ENCODE measurements at regions of chr13 and their contacts with region 1.

Region 1: DNA sequence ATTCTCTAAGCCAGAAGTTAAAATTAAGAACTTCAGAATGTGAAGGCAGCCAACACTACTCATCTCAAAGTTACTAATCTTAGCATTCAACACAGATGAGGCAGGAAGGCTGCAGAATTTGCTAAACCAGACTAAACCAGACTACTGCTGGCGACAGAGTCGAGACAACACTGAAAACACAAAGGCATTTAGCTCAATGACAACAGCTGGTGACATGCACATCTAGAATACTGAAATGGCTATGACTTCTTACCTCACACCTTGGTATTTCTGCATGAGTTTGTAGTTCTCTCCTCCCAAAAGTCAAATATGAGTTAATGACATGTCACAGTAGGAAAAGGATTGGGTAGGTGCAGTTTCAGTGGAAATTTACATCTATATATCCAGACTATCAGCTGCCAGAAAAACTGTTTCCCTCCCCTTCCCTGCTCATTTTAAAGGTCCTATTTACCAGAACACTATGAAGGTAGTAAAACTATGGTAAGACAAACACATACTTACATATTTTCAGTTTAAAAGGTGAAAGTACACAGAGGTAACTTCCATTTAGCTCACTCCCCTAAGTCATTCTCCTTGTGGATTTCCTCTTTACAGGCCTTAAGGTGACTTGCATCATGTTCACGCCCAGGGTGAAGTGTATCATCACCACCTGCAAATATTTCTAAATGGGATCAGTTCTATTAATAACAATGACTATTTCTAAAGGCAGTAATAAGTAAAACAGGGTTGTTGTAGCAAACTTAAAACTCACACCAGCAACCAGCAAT is 21.4 kb downstream of the FOXO1 start:
- DNase-seq: peak in 1 of 2 donors; percentile 62
- ATAC-seq: peak; percentile 85 to 87
- H3K4me3 ChIP-seq: peak overlapping the region in 1 of 4 donors; percentile 36
- H3K27ac ChIP-seq: peak overlapping the region; percentile 66 to 75 (median 74)
- H3K4me1 ChIP-seq: peaks cover 90 to 100% of the 10 kb centered on the region in 2 donors
- H3K27me3 ChIP-seq: no peaks in the 10 kb centered on the region
- CTCF ChIP-seq: no peak
- POLR2A ChIP-seq: no peak

Region 2: DNA sequence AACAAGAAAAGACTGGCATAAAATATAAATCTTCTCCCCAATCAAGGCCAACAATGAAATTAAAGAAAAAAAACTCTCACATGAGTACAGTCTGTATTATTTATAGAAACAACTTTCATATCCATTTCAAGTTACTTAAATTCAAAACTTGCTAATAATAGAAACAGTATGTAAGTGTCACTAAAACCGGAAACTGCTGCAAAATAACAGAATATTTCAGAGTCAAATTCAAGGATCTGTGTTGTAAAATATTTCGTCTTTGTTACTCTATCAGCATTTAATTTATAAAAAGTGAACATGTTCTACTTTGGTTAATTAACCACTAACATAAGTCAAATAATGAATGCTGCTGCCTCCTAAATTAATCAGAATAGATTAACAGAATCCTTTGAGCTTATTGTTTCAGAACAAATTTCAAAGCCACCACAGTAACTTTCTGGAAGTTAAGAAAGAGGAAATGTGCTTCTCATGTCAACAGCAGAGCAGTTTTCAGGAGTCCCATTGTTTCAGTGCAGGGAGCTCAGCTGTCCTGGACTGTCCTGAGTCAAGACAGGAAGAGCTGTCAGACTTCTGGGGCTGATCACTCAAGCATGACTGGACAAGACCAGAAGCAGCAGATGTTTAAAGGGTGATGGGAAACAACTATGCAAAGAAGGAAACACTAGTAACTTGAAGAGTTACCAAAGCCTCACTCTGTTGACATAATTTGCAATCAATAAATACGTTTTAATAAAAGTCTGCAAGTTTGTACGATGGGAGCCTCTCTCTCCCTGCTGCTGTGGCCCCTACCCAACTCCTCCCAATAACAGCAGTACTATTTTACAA is 55.5 kb before region 1 on chr13:
- in situ Hi-C with region 1: loop called in 1 of 4 experiments (anchors 10 kb)
- intact Hi-C with region 1: no loop called
- DNase-seq: peak; percentile 74 to 79
- ATAC-seq: peak; percentile 86
- H3K4me3 ChIP-seq: peak overlapping the region in 3 of 4 donors; percentile 20 to 22 (median 21)
- H3K27ac ChIP-seq: peak overlapping the region; percentile 83 to 89 (median 86)
- H3K4me1 ChIP-seq: peaks cover 93 to 96% of the 10 kb centered on the region in 2 donors
- H3K27me3 ChIP-seq: no peaks in the 10 kb centered on the region
- CTCF ChIP-seq: no peak
- POLR2A ChIP-seq: peak; percentile 40 to 71

Region 3: DNA sequence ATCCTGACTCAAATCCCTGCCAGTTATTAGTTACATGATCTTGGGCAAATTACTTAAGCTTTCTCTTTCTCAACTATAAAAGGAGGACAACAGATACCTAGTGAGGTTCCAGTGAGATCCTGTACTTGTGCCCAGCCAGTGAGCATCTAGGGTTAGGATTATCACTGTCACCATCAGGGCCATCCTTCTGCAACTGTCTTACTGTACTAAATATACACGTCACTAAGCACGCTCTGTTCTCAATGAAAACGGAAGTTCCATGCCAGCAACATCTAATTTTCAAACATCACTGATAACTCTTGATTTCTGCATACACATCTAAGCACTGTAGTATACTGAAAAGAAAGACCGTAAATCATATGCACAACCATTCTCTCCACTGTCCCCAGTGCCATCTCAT is 48.5 kb before region 1 on chr13:
- in situ Hi-C with region 1: loop called in 1 of 4 experiments (anchors 10 kb)
- intact Hi-C with region 1: loop called (anchors 2 kb)
- DNase-seq: peak; percentile 48 to 66
- ATAC-seq: peak; percentile 63 to 78
- H3K4me3 ChIP-seq: peak overlapping the region in 3 of 4 donors; percentile 13 to 19 (median 18)
- H3K27ac ChIP-seq: peak overlapping the region; percentile 83 to 89 (median 86)
- H3K4me1 ChIP-seq: peaks cover 97 to 100% of the 10 kb centered on the region in 2 donors
- H3K27me3 ChIP-seq: no peaks in the 10 kb centered on the region
- CTCF ChIP-seq: no peak
- POLR2A ChIP-seq: no peak

Region 4: DNA sequence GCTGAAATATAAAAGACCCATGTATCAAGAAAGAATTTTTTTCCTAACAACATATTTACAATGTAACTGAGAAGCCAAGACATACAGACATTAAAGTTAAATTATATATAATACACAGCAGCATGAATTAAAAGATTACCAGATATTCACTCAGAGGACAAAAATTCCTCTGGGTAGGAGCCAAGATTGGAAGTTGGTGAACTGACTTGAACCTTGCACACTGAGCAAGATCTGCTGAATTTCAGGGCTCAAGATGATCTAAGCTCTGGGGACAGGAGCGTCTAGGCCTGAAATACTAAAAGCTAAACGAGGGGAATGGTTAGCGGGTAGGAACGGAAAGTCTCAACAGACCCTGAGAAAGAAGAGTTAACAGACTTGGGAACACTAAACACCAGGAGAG is 12.9 kb after region 1 on chr13:
- in situ Hi-C with region 1: no loop called
- intact Hi-C with region 1: loop called (anchors 1 kb)
- DNase-seq: no peak
- ATAC-seq: no peak
- H3K4me3 ChIP-seq: peak overlapping the region in 2 of 4 donors; percentile 2 to 12
- H3K27ac ChIP-seq: peak overlapping the region; percentile 96 to 99 (median 98)
- H3K4me1 ChIP-seq: peaks cover 85 to 86% of the 10 kb centered on the region in 2 donors
- H3K27me3 ChIP-seq: no peaks in the 10 kb centered on the region
- CTCF ChIP-seq: no peak
- POLR2A ChIP-seq: no peak

Region 5: DNA sequence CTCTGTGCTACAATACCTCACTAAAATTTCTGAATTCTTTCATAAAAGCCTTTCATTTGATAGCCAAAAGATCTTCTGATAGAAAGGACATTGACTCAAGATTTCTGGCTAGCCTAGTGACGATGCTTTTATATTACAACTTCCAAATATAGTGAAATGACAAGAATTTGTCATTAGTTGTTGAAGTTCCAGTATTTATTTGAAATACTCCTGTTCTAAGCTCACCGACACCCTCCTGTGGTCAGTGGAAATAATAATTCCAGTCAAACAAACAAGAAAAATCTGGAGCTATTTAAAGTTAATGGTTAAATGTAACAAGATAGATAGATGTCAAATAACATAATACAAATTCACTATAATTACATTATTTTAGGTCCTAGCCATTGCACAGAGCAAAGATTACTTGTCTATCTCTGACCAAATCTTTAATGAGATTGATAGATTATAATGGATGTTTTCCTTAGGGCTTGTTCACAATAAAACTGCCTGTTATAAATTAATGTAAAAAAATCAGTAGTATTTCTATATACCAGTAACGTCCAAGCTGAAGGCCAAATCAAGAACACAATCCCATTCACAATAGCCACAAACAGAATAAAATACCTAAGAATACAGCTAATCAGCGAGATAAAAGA is 1007.8 kb after region 1 on chr13:
- in situ Hi-C with region 1: no loop called
- intact Hi-C with region 1: no loop called
- DNase-seq: no peak
- ATAC-seq: peak; percentile 43 to 58
- H3K4me3 ChIP-seq: no peak overlapping the region
- H3K27ac ChIP-seq: peak overlapping the region; percentile 15 to 58 (median 24)
- H3K4me1 ChIP-seq: peaks cover 3 to 10% of the 10 kb centered on the region in 2 donors
- H3K27me3 ChIP-seq: no peaks in the 10 kb centered on the region
- CTCF ChIP-seq: peak; percentile 50 to 74 (median 55)
- POLR2A ChIP-seq: no peak